Calu3 (cell line): ENCODE measurements at regions of chr2 and their contacts with region 1.

Region 1: DNA sequence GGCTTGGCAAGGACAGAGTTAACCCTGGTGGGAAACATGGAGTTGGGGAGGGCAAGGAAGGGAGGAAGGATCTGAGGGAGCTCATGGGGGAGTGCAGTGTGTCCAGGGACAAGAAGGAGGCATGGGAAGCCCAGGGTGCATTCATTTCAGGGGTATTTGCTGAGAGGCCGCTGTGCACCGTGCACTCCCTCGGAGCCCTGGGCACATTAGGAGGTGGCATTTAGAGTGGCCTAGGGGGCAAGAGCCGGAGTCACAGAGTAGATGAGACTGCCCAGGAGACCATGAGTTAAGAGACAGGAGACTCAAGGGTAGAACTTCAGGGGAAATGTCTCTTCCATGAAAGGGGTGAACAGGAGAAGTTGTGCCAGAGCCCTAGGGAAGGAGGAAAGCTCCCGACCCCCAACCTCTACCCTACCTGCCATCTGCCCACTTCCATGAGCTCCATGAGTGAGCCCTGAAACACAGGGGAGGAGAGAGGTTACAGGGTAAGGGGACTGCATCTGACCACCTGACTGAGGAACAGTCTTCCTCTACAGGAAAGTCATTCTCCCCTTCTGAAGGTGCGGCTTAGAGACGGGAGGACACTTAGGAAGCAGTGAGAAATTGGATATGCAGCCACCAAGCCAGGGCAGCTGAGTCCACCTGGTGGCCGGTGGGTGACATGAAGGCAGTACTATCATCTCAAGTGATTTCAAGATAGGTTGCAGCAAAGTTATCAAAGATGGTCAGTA is 58.5 kb upstream of the COPS8 start:
- DNase-seq: peak; percentile 83
- H3K4me3 Mint-ChIP-seq: no peak overlapping the region
- H3K27ac Mint-ChIP-seq: no peak overlapping the region
- H3K4me1 Mint-ChIP-seq: no peaks in the 10 kb centered on the region
- H3K27me3 Mint-ChIP-seq: no peaks in the 10 kb centered on the region
- CTCF ChIP-seq: peak; percentile 95

Region 2: GRCh38 chr2:236352761-236353593 is 674.2 kb before region 1 on chr2:
- CTCF ChIA-PET with region 1: no interaction called
- intact Hi-C with region 1: loop called (anchors 1 kb)
- DNase-seq: peak; percentile 41
- H3K4me3 Mint-ChIP-seq: no peak overlapping the region
- H3K27ac Mint-ChIP-seq: no peak overlapping the region
- H3K4me1 Mint-ChIP-seq: no peaks in the 10 kb centered on the region
- H3K27me3 Mint-ChIP-seq: peaks cover 35% of the 10 kb centered on the region
- CTCF ChIP-seq: peak; percentile 86

Region 3: GRCh38 chr2:236569573-236569973 is 457.6 kb before region 1 on chr2 and contains the start of gene ACKR3:
- CTCF ChIA-PET with region 1: interaction called, 9 read pairs
- intact Hi-C with region 1: loop called (anchors 1 kb)
- DNase-seq: peak; percentile 76
- H3K4me3 Mint-ChIP-seq: peak within 1 kb of the TSS; percentile 80
- H3K27ac Mint-ChIP-seq: peak within 1 kb of the TSS; percentile 23
- H3K4me1 Mint-ChIP-seq: peaks cover 28% of the 10 kb centered on the region
- H3K27me3 Mint-ChIP-seq: peaks cover 14% of the 10 kb centered on the region
- CTCF ChIP-seq: peak; percentile 58
- total RNA-seq, gene ACKR3: 8.8 and 9.5 TPM in 2 replicates

Region 4: DNA sequence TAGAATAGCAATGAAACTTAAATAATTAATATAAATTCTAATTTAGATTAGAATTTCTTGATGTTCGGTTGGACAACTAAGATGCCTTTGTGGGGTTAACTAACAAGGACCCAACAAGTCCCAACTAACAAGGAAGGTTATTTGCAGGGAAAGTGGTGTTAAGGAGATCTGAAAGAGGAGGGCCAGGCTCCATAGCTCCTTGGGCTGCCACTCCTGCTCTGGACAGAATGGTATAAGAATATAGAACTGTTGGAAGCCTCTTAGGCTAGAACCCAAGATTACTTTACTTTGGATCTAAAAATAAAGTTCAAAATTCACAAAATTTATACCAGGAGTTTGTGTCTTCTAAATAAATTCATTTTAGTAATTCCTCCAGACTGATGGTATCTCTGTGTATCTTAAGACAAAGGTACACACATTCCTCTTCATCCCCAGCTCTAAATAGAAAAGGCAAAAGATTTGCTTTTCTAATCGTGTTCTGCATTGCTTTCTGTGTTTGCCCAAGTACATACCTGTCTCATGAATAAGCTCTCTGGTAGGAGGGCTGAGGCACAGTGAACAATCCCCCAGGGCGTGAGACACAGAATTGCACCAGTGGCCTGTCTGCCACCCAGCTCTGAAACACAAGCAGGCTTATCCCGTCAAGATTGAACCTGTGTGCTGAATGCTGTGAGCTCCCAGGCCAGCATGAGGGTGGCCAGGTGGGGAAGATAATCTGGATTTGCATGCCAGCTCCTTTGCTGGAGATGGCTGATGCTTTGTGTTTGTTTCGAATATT is 281.5 kb before region 1 on chr2:
- CTCF ChIA-PET with region 1: interaction called, 5 read pairs
- intact Hi-C with region 1: loop called (anchors 10 kb)
- DNase-seq: peak; percentile 77
- H3K4me3 Mint-ChIP-seq: no peak overlapping the region
- H3K27ac Mint-ChIP-seq: peak overlapping the region; percentile 43
- H3K4me1 Mint-ChIP-seq: peaks cover 26% of the 10 kb centered on the region
- H3K27me3 Mint-ChIP-seq: peaks cover 10% of the 10 kb centered on the region
- CTCF ChIP-seq: no peak

Region 5: GRCh38 chr2:236939721-236940231 is 87.4 kb before region 1 on chr2:
- CTCF ChIA-PET with region 1: no interaction called
- intact Hi-C with region 1: no loop called
- DNase-seq: no peak
- H3K4me3 Mint-ChIP-seq: no peak overlapping the region
- H3K27ac Mint-ChIP-seq: no peak overlapping the region
- H3K4me1 Mint-ChIP-seq: no peaks in the 10 kb centered on the region
- H3K27me3 Mint-ChIP-seq: peaks cover 26% of the 10 kb centered on the region
- CTCF ChIP-seq: no peak

Region 6: GRCh38 chr2:236998236-236998635 is 28.9 kb before region 1 on chr2:
- CTCF ChIA-PET with region 1: interaction called, 6 read pairs
- intact Hi-C with region 1: loop called (anchors 1 kb)
- DNase-seq: no peak
- H3K4me3 Mint-ChIP-seq: peak overlapping the region; percentile 43
- H3K27ac Mint-ChIP-seq: peak overlapping the region; percentile 76
- H3K4me1 Mint-ChIP-seq: peaks cover 50% of the 10 kb centered on the region
- H3K27me3 Mint-ChIP-seq: no peaks in the 10 kb centered on the region
- CTCF ChIP-seq: no peak